CD14-positive monocyte (primary cell): ENCODE measurements at regions of chr13 and their contacts with region 1.

Region 1: GRCh38 chr13:48233046-48233907 is at the start of gene ITM2B:
- DNase-seq: peak; percentile 54 to 68 (median 64)
- H3K4me3 ChIP-seq: peak within 1 kb of the TSS; percentile 94 to 98 (median 95)
- H3K4me3 Mint-ChIP-seq: peak within 1 kb of the TSS; percentile 96 to 97
- H3K27ac ChIP-seq: peak within 1 kb of the TSS; percentile 92 to 97
- H3K27ac Mint-ChIP-seq: peak within 1 kb of the TSS; percentile 92 to 99 (median 97)
- H3K4me1 ChIP-seq: peaks cover 32 to 45% of the 10 kb centered on the region in 2 donors
- H3K4me1 Mint-ChIP-seq: peaks cover 43% of the 10 kb centered on the region
- H3K27me3 ChIP-seq: no peaks in the 10 kb centered on the region
- H3K27me3 Mint-ChIP-seq: peaks cover 2 to 8% (median 4%) of the 10 kb centered on the region in 3 donors
- CTCF ChIP-seq: peak; percentile 69
- polyA plus RNA-seq, gene ITM2B: 702 to 1,657 (median 1,502) TPM

Region 2: GRCh38 chr13:48126944-48127830 is 106.1 kb before region 1 on chr13:
- intact Hi-C with region 1: loop called (anchors 2 to 5 kb)
- DNase-seq: peak; percentile 57 to 81 (median 72)
- H3K4me3 ChIP-seq: no peak overlapping the region
- H3K4me3 Mint-ChIP-seq: no peak overlapping the region
- H3K27ac ChIP-seq: peak overlapping the region in 1 of 2 donors; percentile 58
- H3K27ac Mint-ChIP-seq: peak overlapping the region in 6 of 7 donors; percentile 47 to 85 (median 80)
- H3K4me1 ChIP-seq: peaks cover 9 to 10% of the 10 kb centered on the region in 2 donors
- H3K4me1 Mint-ChIP-seq: peaks cover 10% of the 10 kb centered on the region
- H3K27me3 ChIP-seq: no peaks in the 10 kb centered on the region
- H3K27me3 Mint-ChIP-seq: peaks cover 0 to 7% (median under 1%) of the 10 kb centered on the region in 3 donors
- CTCF ChIP-seq: peak; percentile 81

Region 3: GRCh38 chr13:48160606-48161278 is 72.5 kb before region 1 on chr13:
- intact Hi-C with region 1: loop called in 1 of 2 experiments (anchors 5 kb)
- DNase-seq: peak in 2 of 3 donors; percentile 47 to 49
- H3K4me3 ChIP-seq: peak overlapping the region in 1 of 3 experiments; percentile 59
- H3K4me3 Mint-ChIP-seq: peak overlapping the region; percentile 45 to 64
- H3K27ac ChIP-seq: peak overlapping the region; percentile 96 to 99
- H3K27ac Mint-ChIP-seq: peak overlapping the region; percentile 98 to 99 (median 99)
- H3K4me1 ChIP-seq: peaks cover 72 to 83% of the 10 kb centered on the region in 2 donors
- H3K4me1 Mint-ChIP-seq: peaks cover 72% of the 10 kb centered on the region
- H3K27me3 ChIP-seq: no peaks in the 10 kb centered on the region
- H3K27me3 Mint-ChIP-seq: peaks cover 0 to 7% (median 0%) of the 10 kb centered on the region in 3 donors
- CTCF ChIP-seq: no peak

Region 4: DNA sequence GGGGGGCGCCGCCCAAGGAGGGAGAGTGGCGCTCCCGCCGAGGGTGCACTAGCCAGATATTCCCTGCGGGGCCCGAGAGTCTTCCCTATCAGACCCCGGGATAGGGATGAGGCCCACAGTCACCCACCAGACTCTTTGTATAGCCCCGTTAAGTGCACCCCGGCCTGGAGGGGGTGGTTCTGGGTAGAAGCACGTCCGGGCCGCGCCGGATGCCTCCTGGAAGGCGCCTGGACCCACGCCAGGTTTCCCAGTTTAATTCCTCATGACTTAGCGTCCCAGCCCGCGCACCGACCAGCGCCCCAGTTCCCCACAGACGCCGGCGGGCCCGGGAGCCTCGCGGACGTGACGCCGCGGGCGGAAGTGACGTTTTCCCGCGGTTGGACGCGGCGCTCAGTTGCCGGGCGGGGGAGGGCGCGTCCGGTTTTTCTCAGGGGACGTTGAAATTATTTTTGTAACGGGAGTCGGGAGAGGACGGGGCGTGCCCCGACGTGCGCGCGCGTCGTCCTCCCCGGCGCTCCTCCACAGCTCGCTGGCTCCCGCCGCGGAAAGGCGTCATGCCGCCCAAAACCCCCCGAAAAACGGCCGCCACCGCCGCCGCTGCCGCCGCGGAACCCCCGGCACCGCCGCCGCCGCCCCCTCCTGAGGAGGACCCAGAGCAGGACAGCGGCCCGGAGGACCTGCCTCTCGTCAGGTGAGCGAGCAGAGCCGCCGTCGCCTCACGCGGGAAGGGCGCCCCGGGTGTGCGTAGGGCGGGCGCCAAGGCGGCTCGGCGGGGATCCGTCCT is 70.3 kb after region 1 on chr13 and contains the start of gene RB1:
- intact Hi-C with region 1: loop called in 1 of 2 experiments (anchors 5 kb)
- DNase-seq: peak; percentile 91 to 96 (median 93)
- H3K4me3 ChIP-seq: peak within 1 kb of the TSS; percentile 60 to 97 (median 93)
- H3K4me3 Mint-ChIP-seq: peak within 1 kb of the TSS; percentile 95 to 98
- H3K27ac ChIP-seq: peak within 1 kb of the TSS; percentile 87 to 99
- H3K27ac Mint-ChIP-seq: peak within 1 kb of the TSS; percentile 98 to 99 (median 99)
- H3K4me1 ChIP-seq: peaks cover 18 to 26% of the 10 kb centered on the region in 2 donors
- H3K4me1 Mint-ChIP-seq: peaks cover 27% of the 10 kb centered on the region
- H3K27me3 ChIP-seq: no peaks in the 10 kb centered on the region
- H3K27me3 Mint-ChIP-seq: peaks cover 0 to 2% (median 0%) of the 10 kb centered on the region in 3 donors
- CTCF ChIP-seq: no peak
- polyA plus RNA-seq, gene RB1: 18.4 to 38.8 (median 29.9) TPM